CD4-positive, alpha-beta T cell (primary cell): ENCODE measurements at regions of chr9 and their contacts with region 1.

Region 1: GRCh38 chr9:102587281-102587680 is 407.9 kb upstream of the CYLC2 start:
- DNase-seq: no peak
- ATAC-seq: no peak
- H3K4me3 ChIP-seq: no peak overlapping the region
- H3K4me3 Mint-ChIP-seq: no peak overlapping the region
- H3K27ac ChIP-seq: no peak overlapping the region
- H3K27ac Mint-ChIP-seq: no peak overlapping the region
- H3K4me1 ChIP-seq: no peaks in the 10 kb centered on the region
- H3K4me1 Mint-ChIP-seq: no peaks in the 10 kb centered on the region
- H3K27me3 ChIP-seq: no peaks in the 10 kb centered on the region
- H3K27me3 Mint-ChIP-seq: no peaks in the 10 kb centered on the region
- CTCF ChIP-seq: no peak

Region 2: DNA sequence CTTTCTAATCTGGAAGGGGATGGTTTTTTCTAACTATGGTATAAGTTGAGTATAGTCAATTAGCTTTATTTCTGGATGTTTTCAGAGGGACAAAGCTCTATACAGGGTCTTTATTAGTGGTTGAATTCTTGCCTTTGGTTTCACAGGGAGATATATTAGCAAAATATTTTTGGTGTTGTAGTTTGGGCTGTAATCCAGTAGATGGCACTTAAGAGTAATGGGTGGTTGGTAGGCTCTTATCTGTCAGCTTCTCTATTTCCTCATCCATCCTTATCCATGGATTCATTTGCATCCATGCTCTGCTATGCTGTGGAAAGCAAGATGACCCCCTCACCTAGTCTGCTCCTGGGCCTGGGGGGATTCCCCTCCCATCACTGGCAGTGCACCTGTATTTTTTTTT is 44.3 kb after region 1 on chr9:
- CTCF ChIA-PET with region 1: no interaction called
- POLR2A ChIA-PET with region 1: no interaction called
- intact Hi-C with region 1: loop called in 1 of 2 experiments (anchors 1 kb)
- DNase-seq: no peak
- ATAC-seq: no peak
- H3K4me3 ChIP-seq: no peak overlapping the region
- H3K4me3 Mint-ChIP-seq: no peak overlapping the region
- H3K27ac ChIP-seq: no peak overlapping the region
- H3K27ac Mint-ChIP-seq: no peak overlapping the region
- H3K4me1 ChIP-seq: no peaks in the 10 kb centered on the region
- H3K4me1 Mint-ChIP-seq: no peaks in the 10 kb centered on the region
- H3K27me3 ChIP-seq: no peaks in the 10 kb centered on the region
- H3K27me3 Mint-ChIP-seq: no peaks in the 10 kb centered on the region
- CTCF ChIP-seq: no peak